Body of pancreas (tissue), 4 donors: ENCODE measurements at regions of chr16 and their contacts with region 1.

Region 1: GRCh38 chr16:57899771-57900661 is 70.9 kb downstream of the CNGB1 start:
- DNase-seq: peak; percentile 73 to 87 (median 81)
- ATAC-seq: peak; percentile 64
- H3K4me3 ChIP-seq: no peak overlapping the region
- H3K27ac ChIP-seq: no peak overlapping the region
- H3K4me1 ChIP-seq: peaks cover 9% of the 10 kb centered on the region
- H3K27me3 ChIP-seq: no peaks in the 10 kb centered on the region
- CTCF ChIP-seq: peak; percentile 79 to 90 (median 87)
- POLR2A ChIP-seq: no peak

Region 2: DNA sequence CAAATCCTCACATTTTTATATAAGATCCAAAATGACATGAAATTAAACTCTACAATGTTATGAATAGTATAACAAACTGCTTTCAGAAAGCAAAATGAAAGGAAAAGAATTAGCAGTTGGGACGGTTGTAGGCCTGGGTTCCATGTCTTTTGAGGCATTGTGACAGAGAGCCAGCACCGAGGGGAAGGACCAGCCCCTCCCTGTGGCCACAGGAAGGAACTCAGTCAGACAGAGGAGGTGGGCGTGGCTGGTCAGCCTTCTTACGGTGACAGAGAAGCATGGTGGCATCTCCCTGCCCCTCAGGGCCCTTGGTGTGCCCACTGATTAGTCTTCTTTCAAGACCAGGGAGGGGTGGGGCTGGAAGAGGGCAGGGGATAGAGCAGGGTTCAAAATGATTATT is 94.8 kb after region 1 on chr16:
- intact Hi-C with region 1: loop called (anchors 5 kb)
- DNase-seq: peak in 3 of 4 donors; percentile 37 to 64 (median 57)
- ATAC-seq: no peak
- H3K4me3 ChIP-seq: no peak overlapping the region
- H3K27ac ChIP-seq: no peak overlapping the region
- H3K4me1 ChIP-seq: peaks cover 48% of the 10 kb centered on the region
- H3K27me3 ChIP-seq: no peaks in the 10 kb centered on the region
- CTCF ChIP-seq: peak in 5 of 7 experiments; percentile 20 to 37 (median 26)
- POLR2A ChIP-seq: no peak

Region 3: GRCh38 chr16:58110571-58111301 is 210.7 kb after region 1 on chr16:
- intact Hi-C with region 1: loop called (anchors 10 kb)
- DNase-seq: no peak
- ATAC-seq: no peak
- H3K4me3 ChIP-seq: no peak overlapping the region
- H3K27ac ChIP-seq: no peak overlapping the region
- H3K4me1 ChIP-seq: no peaks in the 10 kb centered on the region
- H3K27me3 ChIP-seq: no peaks in the 10 kb centered on the region
- CTCF ChIP-seq: no peak
- POLR2A ChIP-seq: no peak